ENCODE measurements at regions of chr2 and their contacts with region 1.

Region 1: DNA sequence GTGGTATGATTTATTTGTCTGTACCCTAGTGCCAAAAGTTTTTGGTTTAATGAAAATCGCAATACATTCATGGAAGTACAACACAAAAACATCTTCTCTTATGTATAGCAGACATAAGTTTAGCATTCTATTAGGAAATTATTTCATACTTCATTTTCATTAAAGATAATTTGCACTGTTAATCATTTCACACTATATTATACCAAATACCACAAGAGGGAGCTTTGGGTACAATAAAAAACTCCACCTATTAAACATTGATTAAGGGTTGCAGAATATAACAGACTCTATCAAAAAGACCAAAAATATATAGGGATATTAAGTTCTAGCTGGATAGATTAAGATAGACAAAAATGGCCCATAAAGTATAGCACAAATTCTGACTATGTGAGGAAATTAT is 79.0 kb downstream of the SLC66A3 start:
- DNase-seq: no peak
- ATAC-seq: no peak
- H3K4me3 ChIP-seq: no peak overlapping the region
- H3K27ac ChIP-seq: no peak overlapping the region
- H3K4me1 ChIP-seq: no peaks in the 10 kb centered on the region
- H3K27me3 ChIP-seq: no peaks in the 10 kb centered on the region
- CTCF ChIP-seq: no peak; the same call in 1 of the 2 replicates
- EP300 ChIP-seq: no peak
- POLR2A ChIP-seq: no peak
- RAD21 ChIP-seq: no peak

Region 2: GRCh38 chr2:11175293-11175795 is 59.0 kb before region 1 on chr2:
- CTCF ChIA-PET with region 1: no interaction called
- POLR2A ChIA-PET with region 1: no interaction called
- in situ Hi-C with region 1: no loop called
- intact Hi-C with region 1: no loop called
- DNase-seq: no peak
- ATAC-seq: peak; percentile 15
- H3K4me3 ChIP-seq: no peak overlapping the region
- H3K27ac ChIP-seq: no peak overlapping the region
- H3K4me1 ChIP-seq: 0 out of 2 replicates have a peak, but pooled peaks cover 13% of the 10 kb centered on the region
- H3K27me3 ChIP-seq: no peaks in the 10 kb centered on the region
- CTCF ChIP-seq: no peak
- EP300 ChIP-seq: no peak
- POLR2A ChIP-seq: peak in 1 of 2 experiments; percentile 38; a peak in 1 of 4 replicates
- RAD21 ChIP-seq: no peak

Region 3: DNA sequence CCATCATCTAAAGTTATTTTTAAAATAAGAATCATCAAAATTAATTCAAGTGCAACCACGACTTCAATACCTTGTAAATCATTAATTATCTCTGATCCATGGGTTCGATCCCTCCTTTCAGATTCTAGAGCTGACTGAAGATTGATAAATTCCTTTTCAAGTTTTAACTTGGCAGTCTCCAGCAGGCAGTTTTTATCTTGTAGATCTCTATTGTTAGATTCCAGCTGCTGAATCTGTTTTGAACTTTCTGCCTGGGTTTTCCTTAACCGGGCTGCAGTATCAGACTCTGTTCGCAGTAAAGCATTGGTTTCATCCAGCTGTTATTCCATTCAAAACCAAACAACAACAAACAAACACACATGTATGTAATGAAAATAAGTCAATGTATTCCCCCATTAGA is 19.5 kb before region 1 on chr2:
- CTCF ChIA-PET with region 1: no interaction called
- POLR2A ChIA-PET with region 1: no interaction called
- in situ Hi-C with region 1: no loop called
- intact Hi-C with region 1: no loop called
- DNase-seq: no peak
- ATAC-seq: no peak
- H3K4me3 ChIP-seq: no peak overlapping the region
- H3K27ac ChIP-seq: no peak overlapping the region
- H3K4me1 ChIP-seq: no peaks in the 10 kb centered on the region
- H3K27me3 ChIP-seq: no peaks in the 10 kb centered on the region
- CTCF ChIP-seq: no peak
- EP300 ChIP-seq: no peak
- POLR2A ChIP-seq: no peak
- RAD21 ChIP-seq: no peak

Region 4: DNA sequence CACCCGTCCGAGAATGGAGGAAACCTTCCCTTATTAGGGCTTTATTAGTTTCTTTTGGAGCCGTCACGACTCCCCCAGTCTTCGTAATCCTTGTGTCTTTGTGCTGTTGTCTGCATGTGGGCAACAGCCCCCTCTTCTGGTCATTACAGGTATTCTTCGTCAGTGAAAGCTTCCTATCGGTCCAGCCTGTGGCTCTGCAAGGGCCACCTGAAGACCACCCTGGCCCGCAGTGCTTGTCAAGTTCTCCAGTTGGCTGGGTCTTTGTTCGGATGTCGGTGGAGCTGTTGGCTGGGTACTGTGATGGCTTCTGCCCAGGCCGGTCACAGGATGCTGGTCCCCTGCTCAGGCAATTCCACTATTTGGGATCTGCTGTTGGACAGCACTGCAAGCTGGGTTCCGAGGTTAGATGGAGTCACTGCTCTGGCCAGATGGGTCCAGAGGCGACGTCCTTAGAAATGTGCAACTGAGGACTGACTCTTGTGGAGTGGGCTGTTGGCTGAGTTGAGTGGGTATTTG is 212.5 kb after region 1 on chr2:
- CTCF ChIA-PET with region 1: interaction called, 3 read pairs
- POLR2A ChIA-PET with region 1: no interaction called
- in situ Hi-C with region 1: no loop called
- intact Hi-C with region 1: loop called (anchors 1 kb)
- DNase-seq: peak; percentile 75
- ATAC-seq: peak; percentile 86
- H3K4me3 ChIP-seq: no peak overlapping the region
- H3K27ac ChIP-seq: no peak overlapping the region
- H3K4me1 ChIP-seq: no peaks in the 10 kb centered on the region
- H3K27me3 ChIP-seq: no peaks in the 10 kb centered on the region
- CTCF ChIP-seq: peak; percentile 94
- EP300 ChIP-seq: no peak
- POLR2A ChIP-seq: no peak
- RAD21 ChIP-seq: peak; percentile 90

Measured in HepG2 (cell line).